CD8-positive, alpha-beta T cell (primary cell): ENCODE measurements at regions of chr6 and their contacts with region 1.

Region 1: DNA sequence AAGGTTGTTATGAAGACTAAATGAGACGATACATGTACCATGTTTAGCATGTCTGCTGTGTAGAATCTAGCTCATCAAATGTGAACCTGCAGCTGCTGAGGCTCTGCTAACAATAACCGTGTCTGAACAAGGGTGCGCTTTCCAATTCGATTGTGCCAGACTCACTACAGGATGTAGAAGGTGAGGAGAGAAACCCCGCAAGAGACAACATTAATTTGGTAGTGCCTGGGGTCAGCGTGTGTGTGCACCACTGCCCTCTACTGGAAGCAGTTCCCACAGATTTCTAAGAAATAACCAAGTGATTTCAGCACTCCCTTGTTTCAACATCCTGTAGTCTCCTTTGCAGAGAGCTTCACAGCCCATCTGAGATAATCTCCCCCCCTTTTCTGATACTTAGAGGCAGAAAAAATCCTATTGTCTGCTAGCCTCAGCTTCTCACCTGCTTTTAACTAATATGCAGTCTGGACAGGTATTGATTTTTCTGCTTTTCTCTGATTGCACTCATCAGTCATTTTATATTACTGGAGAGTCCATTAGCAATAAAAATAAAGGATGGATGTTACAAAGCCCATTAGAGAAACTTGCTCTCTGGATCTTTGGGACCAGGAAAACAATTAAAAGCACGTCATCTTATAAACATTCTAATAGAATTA is 96.7 kb upstream of the BACH2 start:
- DNase-seq: peak; percentile 48 to 88 (median 74)
- ATAC-seq: peak; percentile 62
- H3K4me3 ChIP-seq: no peak overlapping the region
- H3K4me3 Mint-ChIP-seq: no peak overlapping the region
- H3K27ac ChIP-seq: no peak overlapping the region
- H3K27ac Mint-ChIP-seq: peak overlapping the region; percentile 52
- H3K4me1 ChIP-seq: peaks cover 24% of the 10 kb centered on the region
- H3K4me1 Mint-ChIP-seq: peaks cover 30% of the 10 kb centered on the region
- H3K27me3 ChIP-seq: no peaks in the 10 kb centered on the region
- H3K27me3 Mint-ChIP-seq: no peaks in the 10 kb centered on the region
- CTCF ChIP-seq: peak; percentile 73

Region 2: DNA sequence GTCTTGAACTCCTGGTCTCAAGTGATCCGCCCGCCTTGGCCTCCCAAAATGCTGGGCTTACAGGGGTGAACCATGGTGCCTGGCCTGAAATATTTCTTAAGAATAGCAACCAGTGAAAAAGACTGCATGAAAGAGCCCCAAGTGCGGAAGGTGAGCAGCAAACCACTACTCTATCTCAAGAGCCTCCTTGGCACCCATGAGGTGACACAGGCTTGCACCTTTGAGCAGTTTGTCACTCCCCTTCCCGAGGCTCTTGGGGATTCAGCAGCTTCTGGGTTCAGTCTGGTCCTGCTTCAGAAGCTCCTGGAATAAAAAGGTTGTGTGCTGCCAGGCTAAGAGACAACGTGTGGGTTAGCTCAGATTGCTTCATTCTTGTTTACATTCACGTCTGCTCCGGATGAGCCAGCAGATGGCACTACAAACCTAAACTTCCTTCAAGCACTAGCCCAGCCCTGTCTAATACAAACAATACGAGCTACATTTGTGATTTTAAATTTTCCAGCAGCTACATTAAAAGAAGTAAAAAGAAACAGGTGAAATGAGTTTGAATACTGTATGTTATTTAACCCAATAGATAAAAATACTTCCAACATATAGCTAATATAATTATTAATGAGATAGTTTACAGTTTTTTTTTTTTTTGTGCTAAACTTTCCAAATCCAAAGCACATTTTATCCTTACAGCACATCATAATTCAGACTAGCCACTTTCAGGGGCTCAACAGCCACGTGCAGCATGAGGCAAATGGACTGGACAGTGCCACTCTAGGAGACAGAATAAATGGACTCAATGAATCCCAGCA is 452.9 kb before region 1 on chr6:
- CTCF ChIA-PET with region 1: interaction called, 25 read pairs
- POLR2A ChIA-PET with region 1: no interaction called
- intact Hi-C with region 1: loop called (anchors 1 kb)
- DNase-seq: peak; percentile 38 to 87 (median 69)
- ATAC-seq: peak; percentile 95
- H3K4me3 ChIP-seq: no peak overlapping the region
- H3K4me3 Mint-ChIP-seq: no peak overlapping the region
- H3K27ac ChIP-seq: no peak overlapping the region
- H3K27ac Mint-ChIP-seq: peak overlapping the region; percentile 81
- H3K4me1 ChIP-seq: peaks cover 16% of the 10 kb centered on the region
- H3K4me1 Mint-ChIP-seq: peaks cover 40% of the 10 kb centered on the region
- H3K27me3 ChIP-seq: no peaks in the 10 kb centered on the region
- H3K27me3 Mint-ChIP-seq: no peaks in the 10 kb centered on the region
- CTCF ChIP-seq: peak; percentile 80

Region 3: GRCh38 chr6:90080876-90081481 is 312.4 kb before region 1 on chr6:
- CTCF ChIA-PET with region 1: interaction called, 6 read pairs
- POLR2A ChIA-PET with region 1: no interaction called
- intact Hi-C with region 1: loop called in 1 of 2 experiments (anchors 2 kb)
- DNase-seq: peak; percentile 40 to 89 (median 68)
- ATAC-seq: peak; percentile 80
- H3K4me3 ChIP-seq: peak overlapping the region; percentile 54 to 66
- H3K4me3 Mint-ChIP-seq: peak overlapping the region; percentile 98
- H3K27ac ChIP-seq: peak overlapping the region; percentile 66 to 77
- H3K27ac Mint-ChIP-seq: peak overlapping the region; percentile 99
- H3K4me1 ChIP-seq: peaks cover 75% of the 10 kb centered on the region
- H3K4me1 Mint-ChIP-seq: peaks cover 89% of the 10 kb centered on the region
- H3K27me3 ChIP-seq: no peaks in the 10 kb centered on the region
- H3K27me3 Mint-ChIP-seq: no peaks in the 10 kb centered on the region
- CTCF ChIP-seq: no peak

Region 4: GRCh38 chr6:90285611-90286381 is 107.6 kb before region 1 on chr6:
- CTCF ChIA-PET with region 1: interaction called, 20 read pairs
- POLR2A ChIA-PET with region 1: no interaction called
- intact Hi-C with region 1: loop called in 1 of 2 experiments (anchors 1 kb)
- DNase-seq: peak in 5 of 9 experiments; percentile 46 to 77 (median 64)
- ATAC-seq: peak; percentile 46
- H3K4me3 ChIP-seq: peak overlapping the region; percentile 30 to 62
- H3K4me3 Mint-ChIP-seq: peak overlapping the region; percentile 83
- H3K27ac ChIP-seq: peak overlapping the region; percentile 1 to 74
- H3K27ac Mint-ChIP-seq: peak overlapping the region; percentile 93
- H3K4me1 ChIP-seq: peaks cover 93% of the 10 kb centered on the region
- H3K4me1 Mint-ChIP-seq: peaks cover 90% of the 10 kb centered on the region
- H3K27me3 ChIP-seq: no peaks in the 10 kb centered on the region
- H3K27me3 Mint-ChIP-seq: no peaks in the 10 kb centered on the region
- CTCF ChIP-seq: no peak

Region 5: DNA sequence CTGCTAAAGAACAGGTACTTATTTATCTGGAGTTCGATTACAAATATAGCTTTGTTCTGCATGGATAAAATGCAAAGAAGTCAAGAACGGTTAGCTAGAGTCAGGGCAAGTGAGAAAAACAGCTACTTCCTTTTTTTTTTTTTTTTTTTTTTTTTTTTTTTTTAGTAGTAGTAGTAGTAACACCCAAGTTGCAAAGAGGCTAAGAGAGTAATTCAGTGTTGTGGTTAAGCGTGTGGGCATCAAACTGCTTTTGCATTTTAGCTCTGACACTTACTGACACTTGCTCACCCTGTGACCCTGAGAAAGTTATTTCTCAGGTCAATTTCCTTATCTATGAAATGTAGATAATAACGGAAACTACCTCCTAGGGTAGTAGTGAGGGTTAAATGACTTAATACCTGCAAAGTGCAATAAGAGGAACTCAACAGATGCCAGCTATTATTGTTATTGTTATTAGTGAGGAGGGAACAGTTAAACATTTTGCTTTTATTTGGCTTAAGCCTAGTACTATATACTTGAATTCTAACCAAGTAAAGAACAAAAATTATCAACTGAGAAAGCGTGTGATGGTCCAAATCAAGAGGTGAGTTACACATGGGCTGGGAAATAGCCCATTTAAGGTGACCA is 10.0 kb before region 1 on chr6:
- CTCF ChIA-PET with region 1: interaction called, 14 read pairs
- POLR2A ChIA-PET with region 1: interaction called, 5 read pairs
- intact Hi-C with region 1: no loop called
- DNase-seq: peak in 2 of 9 experiments; percentile 47 to 68
- ATAC-seq: peak; percentile 61
- H3K4me3 ChIP-seq: no peak overlapping the region
- H3K4me3 Mint-ChIP-seq: no peak overlapping the region
- H3K27ac ChIP-seq: no peak overlapping the region
- H3K27ac Mint-ChIP-seq: no peak overlapping the region
- H3K4me1 ChIP-seq: peaks cover 13% of the 10 kb centered on the region
- H3K4me1 Mint-ChIP-seq: peaks cover 24% of the 10 kb centered on the region
- H3K27me3 ChIP-seq: no peaks in the 10 kb centered on the region
- H3K27me3 Mint-ChIP-seq: peaks cover 2% of the 10 kb centered on the region
- CTCF ChIP-seq: no peak

Region 6: DNA sequence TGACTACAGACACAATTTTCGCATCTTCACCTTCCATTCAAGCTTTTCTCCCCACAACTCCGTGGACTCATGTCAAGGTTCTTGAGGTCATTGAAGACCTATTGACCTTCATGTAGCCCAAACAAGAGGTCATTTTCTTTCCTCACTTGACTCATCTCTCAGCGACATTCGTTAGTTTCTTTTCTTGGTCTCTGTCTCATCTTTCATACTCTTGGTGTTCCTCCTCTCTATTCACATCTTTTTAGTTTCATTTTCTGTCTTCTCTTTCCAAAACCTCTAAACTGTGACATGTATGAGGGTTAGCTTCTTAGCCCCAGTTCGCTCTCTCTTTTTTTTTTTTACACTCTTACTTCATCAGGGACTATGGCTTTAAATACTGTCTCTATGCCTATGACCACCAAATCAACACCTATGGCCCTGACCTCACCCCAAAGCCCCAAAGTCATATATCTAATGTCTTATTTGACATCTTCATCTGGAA is 31.8 kb after region 1 on chr6:
- CTCF ChIA-PET with region 1: interaction called, 13 read pairs
- POLR2A ChIA-PET with region 1: no interaction called
- intact Hi-C with region 1: no loop called
- DNase-seq: peak in 2 of 9 experiments; percentile 58 to 72
- ATAC-seq: peak; percentile 90
- H3K4me3 ChIP-seq: peak overlapping the region; percentile 37 to 42
- H3K4me3 Mint-ChIP-seq: peak overlapping the region; percentile 72
- H3K27ac ChIP-seq: peak overlapping the region; percentile 35 to 77
- H3K27ac Mint-ChIP-seq: peak overlapping the region; percentile 90
- H3K4me1 ChIP-seq: peaks cover 16% of the 10 kb centered on the region
- H3K4me1 Mint-ChIP-seq: peaks cover 17% of the 10 kb centered on the region
- H3K27me3 ChIP-seq: no peaks in the 10 kb centered on the region
- H3K27me3 Mint-ChIP-seq: no peaks in the 10 kb centered on the region
- CTCF ChIP-seq: no peak

Region 7: GRCh38 chr6:90574610-90575009 is 181.3 kb after region 1 on chr6:
- CTCF ChIA-PET with region 1: no interaction called
- POLR2A ChIA-PET with region 1: no interaction called
- intact Hi-C with region 1: no loop called
- DNase-seq: peak in 1 of 9 experiments; percentile 20
- ATAC-seq: no peak
- H3K4me3 ChIP-seq: no peak overlapping the region
- H3K4me3 Mint-ChIP-seq: no peak overlapping the region
- H3K27ac ChIP-seq: no peak overlapping the region
- H3K27ac Mint-ChIP-seq: no peak overlapping the region
- H3K4me1 ChIP-seq: no peaks in the 10 kb centered on the region
- H3K4me1 Mint-ChIP-seq: peaks cover 34% of the 10 kb centered on the region
- H3K27me3 ChIP-seq: no peaks in the 10 kb centered on the region
- H3K27me3 Mint-ChIP-seq: no peaks in the 10 kb centered on the region
- CTCF ChIP-seq: no peak